MCF 10A (cell line): ENCODE measurements at regions of chr14 and their contacts with region 1.

Region 1: DNA sequence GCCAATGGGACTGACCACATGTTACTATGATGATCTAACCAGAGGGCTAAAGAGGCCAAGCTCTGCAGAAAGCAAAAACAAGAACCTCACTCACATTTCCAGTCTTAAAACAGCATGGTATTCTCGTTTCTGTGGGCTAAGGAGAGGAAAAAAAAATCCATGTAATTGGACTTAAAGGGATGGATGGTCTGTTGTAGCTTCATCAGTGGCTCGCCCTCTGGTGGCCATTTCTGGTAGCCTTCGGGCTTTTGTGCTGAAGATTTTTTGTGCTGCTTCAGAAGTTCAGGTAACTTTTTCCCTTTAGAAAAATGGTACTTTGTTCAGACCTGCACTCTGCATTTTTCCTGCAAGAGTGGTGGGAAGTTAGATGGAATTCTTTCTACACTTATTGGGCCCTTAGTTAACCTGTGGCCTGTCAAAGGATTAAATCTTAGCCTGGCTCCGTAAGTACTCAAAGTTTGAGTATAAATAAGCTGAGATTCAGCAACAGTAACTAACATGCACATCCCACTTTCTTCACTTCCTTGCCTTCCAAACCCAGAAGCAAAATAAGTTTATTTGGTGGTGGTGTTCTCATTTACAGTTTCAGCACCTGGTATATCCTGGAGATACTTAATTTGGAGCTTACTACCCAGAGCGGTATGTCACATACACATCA is 22.3 kb downstream of the DCAF4 start:
- DNase-seq: peak; percentile 62
- H3K4me3 Mint-ChIP-seq: no peak overlapping the region
- H3K27ac Mint-ChIP-seq: no peak overlapping the region
- H3K4me1 Mint-ChIP-seq: no peaks in the 10 kb centered on the region
- H3K27me3 Mint-ChIP-seq: no peaks in the 10 kb centered on the region
- CTCF ChIP-seq: peak; percentile 79

Region 2: DNA sequence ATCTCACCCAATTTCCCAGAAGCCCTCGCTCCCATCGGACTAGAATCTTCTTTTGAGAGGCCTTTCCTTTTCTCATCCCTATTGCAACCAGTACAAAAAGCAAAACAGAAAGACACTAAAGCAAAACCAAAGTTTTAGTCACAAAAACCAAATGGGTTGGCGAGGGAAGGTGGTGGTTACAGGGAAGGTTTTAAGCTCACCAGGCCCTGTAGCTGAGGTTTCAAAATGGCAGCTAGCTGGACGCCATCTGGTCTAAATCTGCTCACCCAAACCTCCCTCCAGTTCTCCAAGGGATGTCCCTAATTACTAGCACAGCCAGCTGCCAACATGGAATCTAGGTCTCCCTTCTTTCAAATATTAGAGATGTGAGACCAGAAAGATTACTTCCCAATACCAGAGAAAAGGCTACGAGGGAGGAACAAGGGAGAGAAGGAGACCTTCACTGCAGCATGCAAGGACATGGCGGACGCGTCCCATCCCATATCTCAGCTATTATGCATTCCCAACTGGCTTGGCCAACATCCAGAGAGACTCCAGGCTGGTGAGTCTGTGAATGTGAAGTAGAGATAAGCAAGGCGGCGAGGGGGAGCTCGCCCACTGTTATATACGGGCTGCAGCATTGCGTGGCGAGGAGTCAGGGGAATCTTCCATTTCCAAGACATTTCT is 125.5 kb before region 1 on chr14:
- CTCF ChIA-PET with region 1: no interaction called
- POLR2A ChIA-PET with region 1: no interaction called
- intact Hi-C with region 1: no loop called
- DNase-seq: no peak
- H3K4me3 Mint-ChIP-seq: no peak overlapping the region
- H3K27ac Mint-ChIP-seq: no peak overlapping the region
- H3K4me1 Mint-ChIP-seq: no peaks in the 10 kb centered on the region
- H3K27me3 Mint-ChIP-seq: no peaks in the 10 kb centered on the region
- CTCF ChIP-seq: no peak

Region 3: GRCh38 chr14:72904840-72905561 is 43.6 kb before region 1 on chr14:
- CTCF ChIA-PET with region 1: interaction called, 24 read pairs
- POLR2A ChIA-PET with region 1: no interaction called
- intact Hi-C with region 1: loop called (anchors 2 kb)
- DNase-seq: peak; percentile 82
- H3K4me3 Mint-ChIP-seq: no peak overlapping the region
- H3K27ac Mint-ChIP-seq: no peak overlapping the region
- H3K4me1 Mint-ChIP-seq: peaks cover 22% of the 10 kb centered on the region
- H3K27me3 Mint-ChIP-seq: no peaks in the 10 kb centered on the region
- CTCF ChIP-seq: peak; percentile 90

Region 4: GRCh38 chr14:72926292-72927028 is 22.1 kb before region 1 on chr14 and contains the start of gene DCAF4:
- CTCF ChIA-PET with region 1: interaction called, 11 read pairs
- POLR2A ChIA-PET with region 1: interaction called, 5 read pairs
- intact Hi-C with region 1: no loop called
- DNase-seq: peak; percentile 99
- H3K4me3 Mint-ChIP-seq: peak within 1 kb of the TSS; percentile 90
- H3K27ac Mint-ChIP-seq: peak within 1 kb of the TSS; percentile 96
- H3K4me1 Mint-ChIP-seq: no peaks in the 10 kb centered on the region
- H3K27me3 Mint-ChIP-seq: no peaks in the 10 kb centered on the region
- CTCF ChIP-seq: no peak
- total RNA-seq, gene DCAF4: 27.9 and 39.4 TPM in 2 replicates

Region 5: GRCh38 chr14:72962829-72963312 is 14.3 kb after region 1 on chr14:
- CTCF ChIA-PET with region 1: interaction called, 35 read pairs
- POLR2A ChIA-PET with region 1: interaction called, 12 read pairs
- intact Hi-C with region 1: no loop called
- DNase-seq: peak; percentile 89
- H3K4me3 Mint-ChIP-seq: peak overlapping the region; percentile 17
- H3K27ac Mint-ChIP-seq: peak overlapping the region; percentile 88
- H3K4me1 Mint-ChIP-seq: peaks cover 34% of the 10 kb centered on the region
- H3K27me3 Mint-ChIP-seq: no peaks in the 10 kb centered on the region
- CTCF ChIP-seq: no peak